ENCODE measurements at regions of chr17 and their contacts with region 1.

Region 1: GRCh38 chr17:48505787-48506645 is 24.8 kb downstream of the HOXB1 start:
- DNase-seq: peak; percentile 66
- H3K4me3 Mint-ChIP-seq: no peak overlapping the region
- H3K27ac Mint-ChIP-seq: no peak overlapping the region
- H3K4me1 Mint-ChIP-seq: peaks cover 17% of the 10 kb centered on the region
- H3K27me3 Mint-ChIP-seq: peaks cover 35% of the 10 kb centered on the region
- CTCF ChIP-seq: peak; percentile 27

Region 2: DNA sequence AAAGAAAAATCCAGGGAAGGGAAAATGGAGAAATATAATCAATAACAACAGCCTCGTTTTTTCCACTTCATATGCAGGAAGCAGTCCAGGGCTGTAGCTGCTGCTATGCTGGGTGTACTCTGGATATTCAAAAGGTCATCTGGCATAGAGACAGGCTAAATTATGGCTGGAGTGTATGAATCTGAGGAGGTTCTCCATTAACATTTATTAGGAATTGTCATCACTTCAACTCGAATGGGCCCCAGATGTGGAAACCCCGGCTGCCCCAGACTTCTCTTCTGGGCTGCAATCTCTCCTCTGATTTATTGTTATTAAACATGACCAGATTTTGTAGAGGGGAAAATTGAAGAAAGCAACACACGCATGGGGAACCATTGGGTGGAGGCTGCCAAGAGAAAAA is 42.5 kb before region 1 on chr17:
- CTCF ChIA-PET with region 1: no interaction called
- intact Hi-C with region 1: no loop called
- DNase-seq: no peak
- H3K4me3 Mint-ChIP-seq: no peak overlapping the region
- H3K27ac Mint-ChIP-seq: no peak overlapping the region
- H3K4me1 Mint-ChIP-seq: no peaks in the 10 kb centered on the region
- H3K27me3 Mint-ChIP-seq: peaks cover 37% of the 10 kb centered on the region
- CTCF ChIP-seq: no peak

Region 3: DNA sequence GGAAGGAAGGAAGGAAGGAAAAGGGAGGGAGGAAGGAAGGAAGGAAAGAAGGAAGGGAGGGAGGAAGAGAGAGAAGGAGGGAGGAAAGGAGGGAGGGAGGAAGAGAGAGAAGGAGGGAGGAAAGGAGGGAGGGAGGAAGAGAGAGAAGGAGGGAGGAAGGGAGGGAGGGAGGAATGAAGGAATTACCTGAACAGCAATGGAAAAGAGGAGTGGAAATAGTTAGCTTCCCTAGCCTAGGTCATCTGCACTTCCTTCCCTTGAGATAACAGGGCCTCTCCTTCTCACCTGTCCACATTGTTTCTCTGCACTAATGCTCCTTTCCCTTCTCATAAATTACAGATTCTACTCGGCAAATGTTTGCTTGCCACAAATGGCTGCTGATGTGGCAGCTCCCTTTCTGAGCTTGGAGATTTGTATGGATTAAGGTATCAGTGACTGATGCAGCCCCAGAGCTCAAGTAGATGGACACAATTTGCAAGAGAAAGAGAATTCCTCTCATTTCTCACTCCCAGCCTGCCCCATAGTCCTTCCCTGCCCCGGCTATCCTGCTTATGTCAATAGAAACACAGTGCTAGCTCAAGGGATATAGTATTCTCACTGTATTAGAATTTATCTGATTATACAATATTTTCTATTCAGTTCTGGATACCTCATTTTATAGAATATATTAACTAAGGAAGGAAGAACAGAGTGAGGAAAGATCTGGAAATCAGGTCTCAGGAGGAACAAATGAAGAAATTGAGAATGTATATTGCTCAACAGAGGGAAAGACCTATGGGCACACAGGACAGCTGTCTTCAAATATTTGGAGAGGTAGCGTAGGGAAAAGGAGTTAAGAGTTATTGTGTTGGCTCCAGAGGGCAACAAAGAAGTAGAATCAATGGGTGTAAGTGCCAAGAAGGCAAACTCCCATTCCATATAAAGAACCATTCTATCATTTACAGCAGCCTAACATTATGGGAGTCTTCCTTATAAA is 10.2 kb after region 1 on chr17:
- CTCF ChIA-PET with region 1: interaction called, 13 read pairs
- intact Hi-C with region 1: no loop called
- DNase-seq: no peak
- H3K4me3 Mint-ChIP-seq: no peak overlapping the region
- H3K27ac Mint-ChIP-seq: no peak overlapping the region
- H3K4me1 Mint-ChIP-seq: no peaks in the 10 kb centered on the region
- H3K27me3 Mint-ChIP-seq: peaks cover 89% of the 10 kb centered on the region
- CTCF ChIP-seq: no peak

Region 4: DNA sequence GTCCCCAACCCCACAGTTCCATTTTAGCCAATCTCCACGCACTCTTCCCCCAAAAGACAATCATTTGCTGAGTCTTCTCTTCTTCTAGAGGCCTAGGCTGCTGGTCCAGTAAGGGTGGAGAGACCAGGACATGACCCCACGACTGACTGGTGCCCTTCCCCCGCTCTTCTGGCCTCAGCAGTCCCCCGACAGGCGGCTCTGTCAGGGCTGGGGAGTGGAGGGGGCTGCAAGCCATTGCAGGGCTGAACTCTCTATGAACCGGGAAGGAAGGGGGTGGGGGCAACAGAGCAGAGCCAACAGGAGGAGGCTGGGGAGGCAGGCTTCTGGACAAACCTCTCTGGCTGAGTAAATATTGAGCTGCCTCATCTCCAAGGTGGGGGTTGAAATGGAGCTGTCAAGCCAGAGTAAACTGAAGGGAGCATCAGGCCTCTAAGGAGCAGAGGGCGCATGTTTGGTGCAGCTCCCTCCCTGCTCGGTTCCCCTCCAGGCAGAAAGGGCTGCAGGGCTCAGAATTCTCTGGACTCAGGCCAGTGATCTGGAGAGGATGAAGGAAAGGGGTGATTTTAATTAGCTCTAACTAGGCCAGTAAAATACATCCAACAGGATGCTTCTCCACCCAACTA is 16.1 kb after region 1 on chr17:
- CTCF ChIA-PET with region 1: interaction called, 13 read pairs
- intact Hi-C with region 1: no loop called
- DNase-seq: peak; percentile 76
- H3K4me3 Mint-ChIP-seq: no peak overlapping the region
- H3K27ac Mint-ChIP-seq: peak overlapping the region; percentile 7
- H3K4me1 Mint-ChIP-seq: peaks cover 16% of the 10 kb centered on the region
- H3K27me3 Mint-ChIP-seq: peaks cover 66% of the 10 kb centered on the region
- CTCF ChIP-seq: no peak